ENCODE measurements at regions of chr19 and their contacts with region 1.

Region 1: GRCh38 chr19:13880059-13881043 is 3.4 kb downstream of the NANOS3 start:
- DNase-seq: peak; percentile 97
- H3K4me3 ChIP-seq: peak overlapping the region; percentile 35
- H3K27ac ChIP-seq: peak overlapping the region; percentile 82
- H3K4me1 ChIP-seq: peaks cover 13% of the 10 kb centered on the region
- H3K27me3 ChIP-seq: no peaks in the 10 kb centered on the region
- CTCF ChIP-seq: peak; percentile 100

Region 2: DNA sequence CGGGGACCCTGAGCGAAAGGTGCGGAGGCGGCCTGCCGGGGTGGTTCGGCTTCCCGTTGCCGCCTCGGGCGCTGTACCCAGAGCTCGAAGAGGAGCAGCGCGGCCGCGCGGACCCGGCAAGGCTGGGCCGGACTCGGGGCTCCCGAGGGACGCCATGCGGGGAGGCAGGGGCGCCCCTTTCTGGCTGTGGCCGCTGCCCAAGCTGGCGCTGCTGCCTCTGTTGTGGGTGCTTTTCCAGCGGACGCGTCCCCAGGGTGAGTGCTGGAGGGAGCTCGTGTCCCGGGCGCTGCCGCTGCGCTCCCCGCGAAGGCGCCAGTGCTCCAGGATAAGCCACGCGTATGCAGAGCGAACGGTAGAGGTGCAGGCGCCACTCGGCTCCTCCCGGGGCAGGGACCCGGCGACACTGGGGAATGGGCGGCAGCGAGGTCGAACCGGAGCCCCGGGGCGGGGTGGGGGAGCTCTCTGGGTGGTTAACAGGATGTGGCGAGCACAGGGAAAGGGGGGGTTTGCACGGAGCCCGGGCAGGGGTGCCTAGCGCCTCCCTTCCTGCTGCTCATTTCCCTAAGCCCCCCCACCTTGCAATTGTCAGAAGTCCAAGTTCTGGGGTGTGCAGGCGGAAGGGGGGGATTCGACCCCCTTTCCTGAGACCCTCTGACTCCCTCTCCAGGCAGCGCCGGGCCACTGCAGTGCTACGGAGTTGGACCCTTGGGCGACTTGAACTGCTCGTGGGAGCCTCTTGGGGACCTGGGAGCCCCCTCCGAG is 151.5 kb after region 1 on chr19 and contains the start of gene IL27RA:
- CTCF ChIA-PET with region 1: interaction called, 3 read pairs
- POLR2A ChIA-PET with region 1: no interaction called
- intact Hi-C with region 1: loop called (anchors 5 kb)
- DNase-seq: peak; percentile 77
- H3K4me3 ChIP-seq: peak within 1 kb of the TSS; percentile 82
- H3K27ac ChIP-seq: peak within 1 kb of the TSS; percentile 77
- H3K4me1 ChIP-seq: no peaks in the 10 kb centered on the region
- H3K27me3 ChIP-seq: no peaks in the 10 kb centered on the region
- CTCF ChIP-seq: peak; percentile 86
- total RNA-seq, gene IL27RA: 5.4 and 6.0 TPM in 2 replicates

Region 3: DNA sequence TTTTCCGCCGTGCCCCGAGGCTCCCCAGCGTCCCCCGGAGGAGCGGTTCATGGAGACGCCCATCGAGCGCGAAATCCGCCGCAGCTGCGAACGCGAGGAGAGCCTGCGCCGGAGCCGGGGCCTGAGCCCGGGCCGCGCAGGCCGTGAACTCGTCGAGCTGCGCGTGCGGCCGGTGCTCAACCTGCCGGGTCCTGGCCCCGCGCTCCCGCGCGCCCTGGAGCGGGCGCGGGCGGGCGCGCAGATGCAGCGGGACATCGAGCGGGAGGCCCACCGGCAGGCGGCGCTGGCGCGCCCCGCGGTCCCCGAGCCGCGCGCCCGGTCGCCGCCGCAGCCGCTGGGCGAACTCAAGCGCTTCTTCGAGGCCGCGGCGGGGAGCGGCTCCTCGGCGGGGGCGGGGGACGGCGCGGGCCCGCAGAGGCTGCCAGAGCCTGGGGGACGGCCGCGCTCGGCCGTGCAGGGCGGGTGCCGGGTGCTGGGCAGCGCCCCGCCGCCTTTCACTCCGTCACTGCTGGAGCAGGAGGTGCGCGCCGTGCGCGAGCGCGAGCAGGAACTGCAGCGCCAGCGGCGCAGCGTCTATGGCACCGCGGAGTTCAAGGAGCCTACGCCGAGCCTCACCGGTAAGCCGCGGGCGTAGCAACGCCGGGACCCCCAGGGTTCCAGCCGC is 193.0 kb after region 1 on chr19:
- CTCF ChIA-PET with region 1: interaction called, 3 read pairs
- POLR2A ChIA-PET with region 1: no interaction called
- intact Hi-C with region 1: loop called (anchors 1 kb)
- DNase-seq: peak; percentile 84
- H3K4me3 ChIP-seq: peak overlapping the region; percentile 49
- H3K27ac ChIP-seq: no peak overlapping the region
- H3K4me1 ChIP-seq: peaks cover 24% of the 10 kb centered on the region
- H3K27me3 ChIP-seq: no peaks in the 10 kb centered on the region
- CTCF ChIP-seq: peak; percentile 18; the same call in 1 of the 2 replicates

Region 4: GRCh38 chr19:14136509-14137281 is 256.3 kb after region 1 on chr19 and contains the start of gene ASF1B:
- CTCF ChIA-PET with region 1: no interaction called
- POLR2A ChIA-PET with region 1: interaction called, 7 read pairs
- intact Hi-C with region 1: loop called (anchors 5 kb)
- DNase-seq: peak; percentile 100
- H3K4me3 ChIP-seq: peak within 1 kb of the TSS; percentile 89
- H3K27ac ChIP-seq: peak within 1 kb of the TSS; percentile 84
- H3K4me1 ChIP-seq: peaks cover 21% of the 10 kb centered on the region
- H3K27me3 ChIP-seq: no peaks in the 10 kb centered on the region
- CTCF ChIP-seq: peak; percentile 91
- total RNA-seq, gene ASF1B: 50.0 and 54.6 TPM in 2 replicates

Region 5: GRCh38 chr19:14479975-14480699 is 599.8 kb after region 1 on chr19:
- CTCF ChIA-PET with region 1: no interaction called
- POLR2A ChIA-PET with region 1: no interaction called
- intact Hi-C with region 1: loop called (anchors 5 kb)
- DNase-seq: peak; percentile 74
- H3K4me3 ChIP-seq: no peak overlapping the region
- H3K27ac ChIP-seq: no peak overlapping the region
- H3K4me1 ChIP-seq: peaks cover 32% of the 10 kb centered on the region
- H3K27me3 ChIP-seq: no peaks in the 10 kb centered on the region
- CTCF ChIP-seq: peak; percentile 99

Measured in A673 (cell line).